WTC11 (cell line): ENCODE measurements at regions of chr9 and their contacts with region 1.

Region 1: GRCh38 chr9:69809304-69809863 is 11.2 kb upstream of the CFAP95 start:
- DNase-seq: peak; percentile 50
- ATAC-seq: peak; percentile 88
- H3K4me3 Mint-ChIP-seq: no peak overlapping the region
- H3K27ac Mint-ChIP-seq: no peak overlapping the region
- H3K4me1 Mint-ChIP-seq: peaks cover 4% of the 10 kb centered on the region; the same call in 1 of the 2 replicates
- H3K27me3 Mint-ChIP-seq: no peaks in the 10 kb centered on the region
- CTCF ChIP-seq: no peak; the same call in 1 of the 2 replicates

Region 2: DNA sequence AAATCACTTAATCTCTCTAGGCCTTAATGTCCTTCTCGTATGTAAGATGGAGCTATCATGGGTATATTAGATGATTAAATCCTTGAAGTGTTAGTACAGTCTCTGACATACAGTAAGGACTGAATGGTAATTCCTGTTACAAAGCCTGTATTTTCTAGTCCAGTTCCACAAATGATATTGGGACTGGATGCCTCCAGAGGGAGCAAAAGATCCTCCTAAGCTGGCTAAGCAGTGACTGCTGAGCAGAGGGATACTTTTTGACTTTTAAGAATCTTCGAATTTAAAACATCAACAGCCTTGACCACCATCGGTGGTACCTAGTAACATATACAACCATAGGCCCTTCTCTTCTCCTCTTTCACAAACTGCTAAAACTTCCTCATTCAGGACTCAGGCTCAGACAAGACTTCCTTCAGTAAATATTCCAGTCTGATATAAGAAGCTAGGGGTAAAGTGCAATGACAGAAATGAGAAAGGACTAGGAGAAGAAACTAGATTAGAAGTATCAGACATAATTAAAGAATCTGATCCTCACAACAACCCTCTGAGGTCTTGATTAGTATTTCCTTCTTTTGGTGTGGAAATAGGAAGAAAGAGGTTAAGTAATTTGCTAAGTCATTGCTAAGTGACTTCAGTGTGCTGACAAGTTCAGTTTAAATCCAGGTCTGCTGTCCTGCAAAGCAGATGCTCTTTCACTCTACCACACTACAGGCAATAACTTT is 63.5 kb before region 1 on chr9:
- CTCF ChIA-PET with region 1: interaction called, 12 read pairs
- POLR2A ChIA-PET with region 1: no interaction called
- DNase-seq: no peak
- ATAC-seq: peak; percentile 56
- H3K4me3 Mint-ChIP-seq: no peak overlapping the region
- H3K27ac Mint-ChIP-seq: peak overlapping the region; percentile 38
- H3K4me1 Mint-ChIP-seq: peaks cover 35% of the 10 kb centered on the region
- H3K27me3 Mint-ChIP-seq: no peaks in the 10 kb centered on the region
- CTCF ChIP-seq: no peak

Region 3: DNA sequence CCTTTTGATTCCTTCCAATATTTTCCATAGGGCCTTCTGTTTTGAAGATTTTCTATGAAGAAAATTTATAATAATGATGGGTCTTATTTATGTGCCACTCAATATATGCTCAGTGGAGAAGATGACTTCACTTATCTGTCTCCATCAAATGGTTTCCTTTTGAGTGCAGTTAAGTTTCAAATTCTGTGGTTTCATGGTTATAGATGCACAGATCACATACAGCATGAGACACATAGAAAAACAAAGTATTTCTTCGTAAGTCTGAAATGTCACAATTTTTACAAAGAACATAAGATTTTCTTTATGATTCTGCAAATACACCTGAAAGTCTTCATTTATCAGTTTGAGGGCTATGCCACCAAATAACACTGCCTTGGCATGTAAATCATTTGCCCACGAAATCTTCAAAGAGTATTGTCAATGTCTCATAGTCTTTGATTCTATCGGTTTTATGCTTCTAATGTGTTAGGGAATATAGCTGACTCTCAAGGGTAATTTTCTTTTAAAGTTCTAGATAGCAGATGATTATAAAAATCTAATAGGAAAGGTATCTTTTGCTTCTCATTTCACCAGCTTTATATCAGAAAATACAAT is 25.3 kb after region 1 on chr9:
- CTCF ChIA-PET with region 1: interaction called, 11 read pairs
- POLR2A ChIA-PET with region 1: no interaction called
- DNase-seq: no peak
- ATAC-seq: no peak
- H3K4me3 Mint-ChIP-seq: no peak overlapping the region
- H3K27ac Mint-ChIP-seq: no peak overlapping the region
- H3K4me1 Mint-ChIP-seq: peaks cover 20% of the 10 kb centered on the region
- H3K27me3 Mint-ChIP-seq: no peaks in the 10 kb centered on the region
- CTCF ChIP-seq: no peak

Region 4: DNA sequence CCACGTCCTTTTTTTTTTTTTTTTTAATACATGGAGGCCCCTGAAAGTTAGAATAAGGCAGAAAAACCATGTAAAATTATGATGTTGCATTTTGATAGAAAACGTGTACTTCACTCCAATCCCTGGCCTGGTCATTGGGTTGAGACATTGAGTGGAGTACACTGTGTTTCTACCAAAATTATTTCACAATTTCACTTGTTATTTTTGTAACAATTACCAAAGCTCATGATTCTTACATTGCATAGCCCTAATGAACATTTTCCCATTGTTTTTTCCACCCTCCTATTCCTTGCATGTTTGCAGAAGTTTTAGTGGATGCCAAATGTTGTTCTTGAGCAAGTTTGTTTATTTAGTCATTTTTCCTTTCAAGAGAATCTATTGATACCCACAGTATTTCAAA is 256.2 kb after region 1 on chr9:
- CTCF ChIA-PET with region 1: no interaction called
- POLR2A ChIA-PET with region 1: no interaction called
- DNase-seq: no peak
- ATAC-seq: no peak
- H3K4me3 Mint-ChIP-seq: no peak overlapping the region
- H3K27ac Mint-ChIP-seq: no peak overlapping the region
- H3K4me1 Mint-ChIP-seq: peaks cover 14% of the 10 kb centered on the region
- H3K27me3 Mint-ChIP-seq: no peaks in the 10 kb centered on the region
- CTCF ChIP-seq: no peak